Activated CD8-positive, alpha-beta T cell treated with anti-CD3 and anti-CD28 coated beads for 36 hours (primary cell): ENCODE measurements at regions of chr1 and their contacts with region 1.

Region 1: GRCh38 chr1:160951443-160952128 is 3.0 kb downstream of the ITLN2 start:
- DNase-seq: peak; percentile 88
- ATAC-seq: peak; percentile 93
- H3K4me3 Mint-ChIP-seq: no peak overlapping the region
- H3K27ac Mint-ChIP-seq: no peak overlapping the region
- H3K4me1 Mint-ChIP-seq: peaks cover 7% of the 10 kb centered on the region
- H3K27me3 Mint-ChIP-seq: no peaks in the 10 kb centered on the region
- CTCF ChIP-seq: peak; percentile 76

Region 2: DNA sequence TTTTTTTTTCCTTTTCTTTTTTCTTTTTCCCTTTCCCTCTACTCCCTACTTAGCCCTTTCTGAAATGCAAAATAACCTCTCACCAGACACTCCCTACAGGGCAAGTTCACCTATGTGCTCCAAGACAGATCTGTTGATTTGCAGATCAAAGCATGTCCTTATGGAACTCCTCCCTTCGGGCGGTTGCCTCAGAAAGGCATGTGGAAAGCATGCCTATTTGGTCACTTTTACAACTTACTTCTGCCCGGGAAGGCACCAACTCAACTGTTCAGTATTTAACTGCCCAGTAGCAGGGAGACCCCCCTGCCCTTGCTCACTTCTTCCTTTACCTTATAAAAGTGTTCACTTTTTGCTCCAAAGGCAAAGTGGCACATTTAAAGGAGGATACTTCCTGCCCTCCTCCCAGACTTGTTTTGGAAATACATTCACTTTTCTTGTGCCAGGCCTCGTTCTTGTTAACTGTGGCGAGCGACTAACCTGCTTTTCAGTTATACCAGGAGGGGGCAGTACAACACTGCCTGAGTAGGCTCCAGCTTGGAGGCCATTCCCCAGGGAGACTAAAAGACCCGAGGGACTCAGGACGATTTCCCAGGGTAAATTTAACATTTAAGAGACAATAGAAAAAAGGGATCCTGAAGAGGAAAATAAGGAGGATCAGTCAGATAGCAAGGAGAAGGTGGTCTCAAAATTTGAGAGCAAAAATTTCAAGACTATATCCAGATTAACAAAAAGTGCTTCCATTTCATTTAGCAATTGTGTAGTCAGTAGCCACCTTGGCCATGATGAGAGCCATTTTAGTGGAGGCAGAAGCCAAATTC is 224.9 kb before region 1 on chr1:
- CTCF ChIA-PET with region 1: interaction called, 74 read pairs
- POLR2A ChIA-PET with region 1: no interaction called
- intact Hi-C with region 1: loop called (anchors 5 kb)
- DNase-seq: peak; percentile 74
- ATAC-seq: peak; percentile 79
- H3K4me3 Mint-ChIP-seq: no peak overlapping the region
- H3K27ac Mint-ChIP-seq: no peak overlapping the region
- H3K4me1 Mint-ChIP-seq: peaks cover 32% of the 10 kb centered on the region
- H3K27me3 Mint-ChIP-seq: no peaks in the 10 kb centered on the region
- CTCF ChIP-seq: peak; percentile 99

Region 3: DNA sequence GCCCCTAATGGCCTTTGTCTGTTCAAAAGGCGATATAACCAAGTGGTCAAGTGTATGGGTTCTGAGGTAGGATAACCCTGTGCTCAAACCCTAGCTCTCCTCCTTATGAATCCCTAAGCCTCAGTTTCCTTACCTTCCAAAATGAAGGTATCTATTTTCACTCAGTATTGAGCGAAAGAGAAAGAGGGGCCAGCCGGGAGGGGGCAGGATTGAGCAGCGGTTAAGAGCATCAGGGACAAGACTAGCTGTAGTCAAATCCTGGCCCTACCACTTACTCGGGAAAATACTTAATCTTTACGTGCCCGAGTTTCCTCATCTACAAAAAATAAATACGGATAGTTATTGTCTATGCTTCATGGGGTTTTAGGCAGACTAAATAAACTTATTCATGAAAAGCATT is 130.0 kb before region 1 on chr1:
- CTCF ChIA-PET with region 1: interaction called, 19 read pairs
- POLR2A ChIA-PET with region 1: no interaction called
- intact Hi-C with region 1: no loop called
- DNase-seq: peak; percentile 37
- ATAC-seq: no peak
- H3K4me3 Mint-ChIP-seq: no peak overlapping the region
- H3K27ac Mint-ChIP-seq: no peak overlapping the region
- H3K4me1 Mint-ChIP-seq: peaks cover 5% of the 10 kb centered on the region
- H3K27me3 Mint-ChIP-seq: no peaks in the 10 kb centered on the region
- CTCF ChIP-seq: no peak

Region 4: DNA sequence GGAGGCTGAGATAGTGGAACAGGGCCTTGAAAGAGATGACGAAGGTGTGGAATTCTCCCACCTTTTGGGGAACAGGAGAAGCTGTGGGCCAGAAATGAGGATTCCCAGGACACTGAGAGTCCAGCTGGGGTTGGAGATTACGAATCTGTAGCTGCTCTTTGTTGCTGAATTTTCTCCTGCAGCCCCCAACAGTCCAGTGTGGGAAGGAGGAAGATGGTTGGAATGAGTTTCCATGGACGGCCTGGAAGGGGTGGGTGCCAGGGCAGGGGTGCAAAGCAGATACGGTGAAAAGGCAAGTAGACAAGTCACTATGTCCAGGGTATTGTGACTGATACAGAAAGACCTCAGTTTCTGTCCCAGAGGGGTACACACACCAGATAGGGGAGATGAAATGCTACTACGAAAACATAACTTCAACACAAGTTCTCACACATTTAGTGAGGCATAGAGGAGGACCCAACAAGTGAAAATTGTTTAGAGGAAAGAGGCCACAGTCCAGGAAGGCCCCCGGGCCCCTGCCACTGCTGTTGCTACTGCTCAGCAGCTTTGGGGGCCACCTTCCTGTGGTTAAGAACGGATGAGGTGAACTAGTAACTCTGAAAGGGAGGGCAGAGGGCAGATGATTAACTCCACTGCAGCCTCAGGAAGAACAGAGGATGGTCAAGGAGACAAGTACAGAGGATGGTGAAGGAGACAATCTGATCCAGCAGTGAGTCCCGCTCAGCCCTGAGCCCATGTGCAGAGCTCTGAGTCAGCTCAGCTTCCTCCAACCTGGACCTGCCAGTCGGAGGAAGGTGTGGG is 96.2 kb before region 1 on chr1:
- CTCF ChIA-PET with region 1: interaction called, 11 read pairs
- POLR2A ChIA-PET with region 1: interaction called, 3 read pairs
- intact Hi-C with region 1: no loop called
- DNase-seq: peak; percentile 76
- ATAC-seq: peak; percentile 82
- H3K4me3 Mint-ChIP-seq: no peak overlapping the region
- H3K27ac Mint-ChIP-seq: no peak overlapping the region
- H3K4me1 Mint-ChIP-seq: peaks cover 14% of the 10 kb centered on the region
- H3K27me3 Mint-ChIP-seq: no peaks in the 10 kb centered on the region
- CTCF ChIP-seq: no peak

Region 5: DNA sequence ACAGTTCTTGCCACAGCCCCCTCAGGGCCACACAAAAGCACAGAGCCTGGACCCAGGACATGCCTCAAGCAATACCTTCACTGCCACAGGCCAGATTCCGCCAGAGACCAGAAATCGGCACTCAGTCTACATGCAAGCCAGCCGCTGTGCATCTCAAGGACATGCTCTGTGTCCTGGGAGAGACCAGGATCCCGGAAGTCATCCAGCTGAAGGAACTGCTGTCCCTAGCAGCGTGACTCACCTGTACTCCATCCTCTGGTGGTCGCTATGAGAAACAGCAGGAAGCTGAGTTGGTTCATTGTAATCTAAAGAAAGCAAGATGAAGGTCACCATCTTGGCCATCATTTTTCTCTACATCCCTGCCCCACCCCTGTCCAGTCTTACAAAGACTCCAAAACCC is 67.0 kb before region 1 on chr1:
- CTCF ChIA-PET with region 1: interaction called, 15 read pairs
- POLR2A ChIA-PET with region 1: no interaction called
- intact Hi-C with region 1: no loop called
- DNase-seq: no peak
- ATAC-seq: peak; percentile 51
- H3K4me3 Mint-ChIP-seq: no peak overlapping the region
- H3K27ac Mint-ChIP-seq: no peak overlapping the region
- H3K4me1 Mint-ChIP-seq: no peaks in the 10 kb centered on the region
- H3K27me3 Mint-ChIP-seq: no peaks in the 10 kb centered on the region
- CTCF ChIP-seq: peak; percentile 39

Region 6: DNA sequence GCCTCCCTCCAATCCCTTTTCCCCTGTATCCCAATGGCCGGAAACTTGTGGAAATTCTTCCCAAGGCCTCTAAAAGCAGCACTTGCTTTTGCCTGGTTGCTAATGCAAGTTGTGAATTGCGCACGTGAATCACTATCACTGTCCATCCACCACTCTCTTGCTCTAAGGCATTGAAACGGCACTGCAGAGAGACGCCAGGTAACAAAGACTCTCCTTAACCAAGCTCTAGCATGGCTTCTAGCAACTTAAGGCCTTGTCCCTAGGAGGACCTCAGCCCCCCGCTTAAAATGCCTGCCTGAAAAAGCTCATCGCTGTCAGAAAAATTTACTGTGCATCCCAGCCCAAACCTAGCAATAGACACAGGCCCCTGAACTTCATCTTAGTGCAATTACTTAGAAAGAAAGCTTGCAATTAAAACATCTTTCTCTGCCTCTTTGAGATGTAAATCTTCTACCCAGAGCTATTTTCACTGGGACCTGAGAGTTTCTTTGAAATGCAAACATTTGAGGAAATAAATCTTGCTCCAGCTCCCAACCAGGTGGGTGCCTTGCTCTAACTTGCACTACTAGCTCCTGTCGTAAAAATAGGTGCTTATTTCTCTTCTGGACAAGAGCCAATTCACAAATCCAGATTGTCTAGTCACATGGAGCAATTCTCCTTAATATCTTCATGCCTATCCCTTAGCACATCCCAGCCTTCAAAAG is 35.9 kb after region 1 on chr1:
- CTCF ChIA-PET with region 1: interaction called, 17 read pairs
- POLR2A ChIA-PET with region 1: no interaction called
- intact Hi-C with region 1: no loop called
- DNase-seq: no peak
- ATAC-seq: no peak
- H3K4me3 Mint-ChIP-seq: no peak overlapping the region
- H3K27ac Mint-ChIP-seq: no peak overlapping the region
- H3K4me1 Mint-ChIP-seq: peaks cover 2% of the 10 kb centered on the region
- H3K27me3 Mint-ChIP-seq: peaks cover under 1% of the 10 kb centered on the region
- CTCF ChIP-seq: no peak